OCI-LY7 (cell line): ENCODE measurements at regions of chr18 and their contacts with region 1.

Region 1: DNA sequence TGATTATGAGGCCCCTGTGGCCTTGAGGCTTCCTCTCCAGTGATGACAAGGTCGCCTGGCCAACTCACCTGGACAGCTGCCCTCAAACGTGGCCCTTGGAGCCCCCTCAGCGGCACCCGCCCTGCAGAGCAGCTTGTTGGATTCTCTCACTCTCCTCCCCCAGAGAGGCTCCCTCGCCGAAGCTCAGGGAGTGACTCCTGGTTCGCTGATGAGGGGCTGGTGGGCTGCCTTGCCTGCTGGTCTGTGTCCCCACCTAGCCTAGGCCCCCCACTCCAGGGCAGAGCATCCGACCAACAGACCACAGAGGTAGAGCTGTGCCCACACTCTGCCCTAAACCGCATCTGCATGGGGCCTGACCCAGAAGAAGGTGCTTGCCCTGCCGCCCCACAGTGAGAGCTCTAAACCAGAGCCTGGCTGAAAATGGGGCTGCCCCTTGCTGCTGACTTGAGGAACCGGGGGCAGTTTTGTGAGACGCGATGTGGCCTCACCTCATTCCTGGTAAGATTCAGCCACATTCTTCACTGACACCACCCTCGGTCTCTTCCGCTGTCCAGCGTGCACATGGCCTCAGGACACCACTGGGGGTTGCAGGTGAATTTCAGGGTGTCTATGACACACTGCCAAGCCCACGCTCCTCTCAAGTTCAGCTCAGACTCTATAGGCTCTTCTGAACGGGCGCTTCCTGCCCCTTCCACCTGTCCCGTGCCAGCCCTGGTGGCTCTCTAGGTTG is 131.6 kb downstream of the CABLES1 start:
- DNase-seq: no peak
- H3K4me3 ChIP-seq: no peak overlapping the region
- H3K27ac ChIP-seq: no peak overlapping the region
- H3K4me1 ChIP-seq: no peaks in the 10 kb centered on the region
- CTCF ChIP-seq: no peak

Region 2: DNA sequence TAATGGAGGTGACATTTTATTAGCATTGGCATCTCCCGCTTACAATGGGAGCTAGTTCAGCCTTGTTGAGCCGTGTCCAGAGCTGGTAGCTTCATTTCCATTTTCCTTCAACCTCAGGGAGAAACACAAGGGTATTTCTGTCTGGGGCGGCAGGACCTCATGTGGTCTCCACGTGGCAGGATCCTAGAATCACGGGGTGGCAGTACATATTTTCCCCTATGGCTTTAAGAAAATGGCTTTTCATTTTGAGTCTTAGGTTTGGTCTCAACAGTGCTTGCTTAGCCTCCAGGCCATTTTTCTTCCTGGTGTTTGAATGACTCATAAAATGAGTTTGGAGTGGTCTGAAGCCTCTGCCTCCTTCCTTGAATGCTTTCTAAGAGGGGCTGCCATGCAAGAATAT is 111.3 kb before region 1 on chr18:
- CTCF ChIA-PET with region 1: no interaction called
- POLR2A ChIA-PET with region 1: no interaction called
- intact Hi-C with region 1: no loop called
- DNase-seq: no peak
- H3K4me3 ChIP-seq: no peak overlapping the region
- H3K27ac ChIP-seq: no peak overlapping the region
- H3K4me1 ChIP-seq: no peaks in the 10 kb centered on the region
- CTCF ChIP-seq: no peak

Region 3: DNA sequence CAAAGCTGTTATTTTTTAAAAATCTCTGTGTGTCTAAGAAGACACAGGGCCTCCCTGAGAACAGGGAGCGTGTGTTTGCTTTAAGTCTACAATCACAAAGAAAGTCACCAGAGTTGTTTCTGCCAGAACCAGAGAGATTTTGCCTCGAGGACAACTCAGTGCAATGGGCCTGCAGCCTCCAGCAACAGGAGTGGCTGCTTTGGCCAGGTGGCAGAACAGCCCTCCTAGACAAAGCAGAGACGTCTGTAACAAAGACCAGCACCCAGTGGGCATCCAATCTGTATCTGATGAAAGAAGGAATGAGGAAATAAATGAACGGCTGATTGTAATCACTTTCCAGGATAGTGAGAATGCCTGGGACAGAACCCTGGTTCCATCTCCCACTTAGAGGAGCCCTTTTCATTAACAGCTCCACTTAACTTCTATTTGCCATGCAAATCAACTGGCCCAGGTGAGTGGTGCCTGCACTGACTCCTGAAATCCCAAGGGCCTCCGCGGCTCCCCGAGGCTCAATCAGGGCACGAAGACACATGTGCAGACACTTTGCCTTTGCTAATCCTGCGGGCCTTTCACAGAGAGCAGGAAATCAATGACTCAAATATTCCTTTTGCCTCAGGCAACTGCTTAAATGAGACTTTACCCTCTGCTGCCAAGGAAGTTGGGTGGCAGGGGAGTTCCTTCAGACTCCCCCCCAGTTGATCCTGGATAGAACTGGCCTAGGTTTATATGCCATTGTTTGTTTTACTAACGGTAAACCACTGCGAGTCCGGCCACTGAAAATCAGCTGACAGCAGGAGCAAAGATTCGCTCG is 14.9 kb after region 1 on chr18:
- CTCF ChIA-PET with region 1: no interaction called
- POLR2A ChIA-PET with region 1: interaction called, 11 read pairs
- intact Hi-C with region 1: no loop called
- DNase-seq: no peak
- H3K4me3 ChIP-seq: no peak overlapping the region
- H3K27ac ChIP-seq: no peak overlapping the region
- H3K4me1 ChIP-seq: peaks cover 8% of the 10 kb centered on the region
- CTCF ChIP-seq: no peak

Region 4: DNA sequence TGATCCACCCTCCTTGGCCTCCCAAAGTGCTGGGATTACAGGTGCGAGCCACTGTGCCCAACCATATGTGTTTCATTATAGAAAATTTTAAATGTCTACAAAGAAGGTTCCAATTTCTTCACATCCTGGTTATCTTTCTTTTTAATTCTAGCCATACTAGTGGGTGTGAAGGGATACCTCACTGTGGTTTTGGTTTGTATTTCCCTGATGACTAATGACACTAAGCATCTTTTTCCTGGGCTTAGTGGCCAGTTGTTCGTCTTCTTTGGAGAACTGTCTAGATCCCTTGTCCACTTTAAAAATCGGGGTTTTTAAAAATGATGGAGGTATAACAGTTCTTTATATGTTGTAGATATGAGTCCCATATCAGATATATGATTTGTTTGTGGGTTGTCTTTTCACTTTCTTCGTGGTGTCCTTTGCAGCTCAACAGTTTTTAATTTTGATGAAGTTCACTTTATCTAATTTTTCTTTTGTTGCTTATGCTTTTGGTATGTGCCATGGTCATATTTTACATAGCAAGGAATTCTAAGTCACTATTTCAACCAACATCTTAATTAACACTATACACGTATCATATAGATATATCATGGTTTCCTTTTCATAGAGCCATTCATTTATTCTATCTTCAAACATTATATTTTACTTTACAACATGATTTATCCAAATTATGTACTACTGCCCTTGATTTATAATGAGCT is 51.2 kb after region 1 on chr18:
- CTCF ChIA-PET with region 1: interaction called, 12 read pairs
- POLR2A ChIA-PET with region 1: no interaction called
- intact Hi-C with region 1: no loop called
- DNase-seq: no peak
- H3K4me3 ChIP-seq: no peak overlapping the region
- H3K27ac ChIP-seq: no peak overlapping the region
- H3K4me1 ChIP-seq: peaks cover 18% of the 10 kb centered on the region
- CTCF ChIP-seq: no peak